CD4-positive, alpha-beta T cell (primary cell): ENCODE measurements at regions of chr21 and their contacts with region 1.

Region 1: GRCh38 chr21:33976082-33977016 is 60.7 kb upstream of the ATP5PO start:
- DNase-seq: peak; percentile 19 to 80 (median 54)
- ATAC-seq: peak; percentile 75
- H3K4me3 ChIP-seq: peak overlapping the region; percentile 15
- H3K4me3 Mint-ChIP-seq: peak overlapping the region; percentile 49
- H3K27ac ChIP-seq: peak overlapping the region; percentile 65 to 71
- H3K27ac Mint-ChIP-seq: peak overlapping the region; percentile 88
- H3K4me1 ChIP-seq: peaks cover 34% of the 10 kb centered on the region
- H3K4me1 Mint-ChIP-seq: peaks cover 50% of the 10 kb centered on the region
- H3K27me3 ChIP-seq: no peaks in the 10 kb centered on the region
- H3K27me3 Mint-ChIP-seq: no peaks in the 10 kb centered on the region
- CTCF ChIP-seq: no peak

Region 2: GRCh38 chr21:33931799-33932390 is 44.5 kb before region 1 on chr21:
- CTCF ChIA-PET with region 1: interaction called, 3 read pairs
- POLR2A ChIA-PET with region 1: interaction called, 10 read pairs
- intact Hi-C with region 1: loop called (anchors 5 kb)
- DNase-seq: peak in 4 of 14 experiments; percentile 18 to 72 (median 49)
- ATAC-seq: peak; percentile 24
- H3K4me3 ChIP-seq: peak overlapping the region; percentile 71
- H3K4me3 Mint-ChIP-seq: peak overlapping the region; percentile 94
- H3K27ac ChIP-seq: peak overlapping the region; percentile 88 to 95
- H3K27ac Mint-ChIP-seq: peak overlapping the region; percentile 98
- H3K4me1 ChIP-seq: peaks cover 43% of the 10 kb centered on the region
- H3K4me1 Mint-ChIP-seq: peaks cover 59% of the 10 kb centered on the region
- H3K27me3 ChIP-seq: no peaks in the 10 kb centered on the region
- H3K27me3 Mint-ChIP-seq: no peaks in the 10 kb centered on the region
- CTCF ChIP-seq: no peak